GM23248 (cell line): ENCODE measurements at regions of chr12 and their contacts with region 1.

Region 1: GRCh38 chr12:33994857-33995808 is 27.2 kb upstream of the ALG10 start:
- DNase-seq: no peak
- H3K4me3 ChIP-seq: no peak overlapping the region
- H3K27ac ChIP-seq: no peak overlapping the region
- H3K4me1 ChIP-seq: no peaks in the 10 kb centered on the region
- H3K27me3 ChIP-seq: no peaks in the 10 kb centered on the region

Region 2: GRCh38 chr12:32761716-32762115 is 1233.4 kb before region 1 on chr12:
- in situ Hi-C with region 1: loop called (anchors 10 kb)
- DNase-seq: no peak
- H3K4me3 ChIP-seq: no peak overlapping the region
- H3K27ac ChIP-seq: no peak overlapping the region
- H3K4me1 ChIP-seq: no peaks in the 10 kb centered on the region
- H3K27me3 ChIP-seq: peaks cover 4% of the 10 kb centered on the region; the same call in 1 of the 2 replicates

Region 3: DNA sequence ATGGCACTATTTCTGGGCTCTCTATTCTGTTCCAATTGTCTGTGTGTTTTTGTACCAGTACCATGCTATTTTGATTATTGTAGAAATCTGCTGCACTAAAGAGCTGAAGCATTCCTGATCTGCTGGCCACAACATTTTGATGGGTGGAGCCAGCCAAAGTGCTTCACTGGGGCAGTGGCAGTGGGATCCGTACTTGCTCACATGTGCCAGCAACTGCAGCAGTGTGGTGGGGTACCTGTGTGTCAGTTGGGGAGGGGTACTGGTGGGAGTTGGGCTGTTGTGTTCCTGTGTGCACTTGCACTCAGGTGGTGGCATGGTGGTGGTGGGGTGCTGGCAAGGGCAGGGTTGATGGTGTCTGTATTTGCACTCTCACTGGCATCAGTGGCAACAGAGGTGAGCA is 177.4 kb before region 1 on chr12:
- in situ Hi-C with region 1: no loop called
- DNase-seq: no peak
- H3K4me3 ChIP-seq: no peak overlapping the region
- H3K27ac ChIP-seq: no peak overlapping the region
- H3K4me1 ChIP-seq: no peaks in the 10 kb centered on the region
- H3K27me3 ChIP-seq: no peaks in the 10 kb centered on the region

Region 4: GRCh38 chr12:33892411-33892810 is 102.7 kb before region 1 on chr12:
- in situ Hi-C with region 1: no loop called
- DNase-seq: no peak
- H3K4me3 ChIP-seq: no peak overlapping the region
- H3K27ac ChIP-seq: no peak overlapping the region
- H3K4me1 ChIP-seq: no peaks in the 10 kb centered on the region
- H3K27me3 ChIP-seq: no peaks in the 10 kb centered on the region